Ascending aorta (tissue), 2 donors: ENCODE measurements at regions of chr12 and their contacts with region 1.

Region 1: GRCh38 chr12:98490501-98491453 is 24.6 kb upstream of the TMPO start:
- DNase-seq: peak; percentile 32 to 94
- H3K4me3 ChIP-seq: peak overlapping the region; percentile 9 to 28
- H3K27ac ChIP-seq: peak overlapping the region; percentile 59 to 60
- H3K4me1 ChIP-seq: peaks cover 0 to 2% of the 10 kb centered on the region in 2 donors
- H3K27me3 ChIP-seq: no peaks in the 10 kb centered on the region
- CTCF ChIP-seq: peak; percentile 82 to 87 (median 83)

Region 2: GRCh38 chr12:98369581-98369980 is 121.2 kb before region 1 on chr12:
- intact Hi-C with region 1: no loop called
- DNase-seq: no peak
- H3K4me3 ChIP-seq: no peak overlapping the region
- H3K27ac ChIP-seq: no peak overlapping the region
- H3K4me1 ChIP-seq: no peaks in the 10 kb centered on the region
- H3K27me3 ChIP-seq: no peaks in the 10 kb centered on the region
- CTCF ChIP-seq: no peak

Region 3: GRCh38 chr12:98424726-98425401 is 65.9 kb before region 1 on chr12:
- intact Hi-C with region 1: loop called (anchors 2 kb)
- DNase-seq: peak in 1 of 2 donors; percentile 81
- H3K4me3 ChIP-seq: no peak overlapping the region
- H3K27ac ChIP-seq: no peak overlapping the region
- H3K4me1 ChIP-seq: peaks cover 0 to 6% of the 10 kb centered on the region in 2 donors
- H3K27me3 ChIP-seq: no peaks in the 10 kb centered on the region
- CTCF ChIP-seq: peak; percentile 38 to 79 (median 65)

Region 4: DNA sequence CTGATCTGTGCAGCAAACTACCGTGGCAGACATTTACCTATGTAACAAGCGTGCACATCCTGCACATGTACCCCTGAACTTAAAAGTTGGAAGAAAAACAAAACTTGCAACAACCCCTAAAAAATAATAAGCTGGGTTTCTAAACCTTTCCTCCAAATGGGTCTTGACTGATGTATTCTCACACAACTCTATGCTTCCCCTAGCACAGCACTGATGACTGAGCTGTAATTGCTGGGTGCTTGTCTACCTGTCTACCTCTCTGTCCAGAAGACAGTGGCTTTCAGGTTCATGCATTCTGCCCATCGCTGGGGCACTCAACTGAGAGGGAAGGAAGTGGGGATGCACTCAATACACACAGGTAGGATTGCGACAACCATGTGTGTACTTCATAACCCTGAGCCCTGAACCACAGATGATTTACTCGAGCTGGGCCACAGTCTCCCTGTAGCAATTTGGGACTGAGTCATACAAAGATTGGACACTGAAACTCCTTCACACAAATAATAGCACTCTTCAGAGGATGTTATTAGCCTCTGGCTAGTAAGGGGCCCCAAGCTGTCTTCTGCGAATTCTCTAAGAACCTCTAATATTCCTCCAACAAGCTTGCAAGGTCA is 20.2 kb before region 1 on chr12:
- intact Hi-C with region 1: no loop called
- DNase-seq: no peak
- H3K4me3 ChIP-seq: no peak overlapping the region
- H3K27ac ChIP-seq: no peak overlapping the region
- H3K4me1 ChIP-seq: peaks cover 3% of the 10 kb centered on the region in 2 donors
- H3K27me3 ChIP-seq: no peaks in the 10 kb centered on the region
- CTCF ChIP-seq: no peak

Region 5: DNA sequence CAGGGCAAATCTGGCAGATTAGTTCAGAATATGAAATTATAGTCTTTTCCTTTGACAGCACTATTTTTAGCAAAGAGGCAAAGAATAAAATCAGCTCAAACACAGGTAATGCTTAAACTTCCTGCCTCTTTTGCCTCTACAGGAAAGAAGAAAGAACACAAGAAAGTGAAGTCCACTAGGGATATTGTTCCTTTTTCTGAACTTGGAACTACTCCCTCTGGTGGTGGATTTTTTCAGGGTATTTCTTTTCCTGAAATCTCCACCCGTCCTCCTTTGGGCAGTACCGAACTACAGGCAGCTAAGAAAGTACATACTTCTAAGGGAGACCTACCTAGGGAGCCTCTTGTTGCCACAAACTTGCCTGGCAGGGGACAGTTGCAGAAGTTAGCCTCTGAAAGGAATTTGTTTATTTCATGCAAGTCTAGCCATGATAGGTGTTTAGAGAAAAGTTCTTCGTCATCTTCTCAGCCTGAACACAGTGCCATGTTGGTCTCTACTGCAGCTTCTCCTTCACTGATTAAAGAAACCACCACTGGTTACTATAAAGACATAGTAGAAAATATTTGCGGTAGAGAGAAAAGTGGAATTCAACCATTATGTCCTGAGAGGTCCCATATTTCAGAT is 42.0 kb after region 1 on chr12:
- intact Hi-C with region 1: loop called (anchors 5 kb)
- DNase-seq: no peak
- H3K4me3 ChIP-seq: no peak overlapping the region
- H3K27ac ChIP-seq: no peak overlapping the region
- H3K4me1 ChIP-seq: no peaks in the 10 kb centered on the region
- H3K27me3 ChIP-seq: no peaks in the 10 kb centered on the region
- CTCF ChIP-seq: peak in 2 of 3 experiments; percentile 42 to 46